ENCODE measurements at regions of chr16 and their contacts with region 1.

Region 1: DNA sequence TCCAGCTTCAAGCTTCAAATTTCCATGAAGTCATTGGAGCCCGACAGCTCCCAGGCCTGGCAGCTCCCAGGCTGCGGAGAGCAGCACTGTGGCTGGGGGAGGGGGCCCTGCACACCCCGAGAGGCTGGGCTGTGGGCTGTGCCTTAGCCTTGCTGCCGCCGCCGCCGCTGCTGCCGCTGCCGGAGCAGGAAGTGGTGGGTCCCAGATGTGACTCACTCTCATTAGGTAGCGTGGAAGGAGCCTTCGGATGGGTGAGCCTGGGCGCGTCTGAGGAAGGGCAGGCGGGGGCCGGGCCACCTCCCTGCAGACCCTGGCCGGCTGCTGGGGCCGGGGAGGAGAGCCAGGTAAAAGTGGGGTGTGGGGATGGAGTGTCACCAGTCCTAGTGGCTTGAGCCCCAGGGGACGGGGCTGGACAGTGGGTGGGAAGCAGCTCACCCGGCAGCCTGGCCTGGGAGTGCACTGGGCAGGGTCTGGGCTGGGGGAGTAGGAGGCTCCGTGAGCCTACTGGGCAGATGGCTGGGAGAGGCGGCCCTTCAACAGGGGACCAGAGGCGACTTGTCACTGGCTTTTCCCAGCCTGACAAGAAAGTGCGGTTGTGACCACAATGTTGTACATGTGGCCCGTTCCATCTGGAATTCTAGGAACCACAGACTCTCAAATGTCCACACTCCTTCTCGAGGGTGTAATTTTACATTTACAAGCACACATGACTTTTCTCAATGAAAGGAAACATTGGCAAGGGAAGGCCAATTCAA is at the start of gene ADCY7:
- DNase-seq: peak; percentile 85
- H3K4me3 ChIP-seq: peak within 1 kb of the TSS; percentile 76
- H3K27ac ChIP-seq: peak within 1 kb of the TSS; percentile 60
- H3K4me1 ChIP-seq: peaks cover 54% of the 10 kb centered on the region
- CTCF ChIP-seq: no peak
- total RNA-seq, gene ADCY7: 36.9 and 49.9 TPM in 2 replicates

Region 2: GRCh38 chr16:50281964-50282538 is 15.5 kb after region 1 on chr16:
- CTCF ChIA-PET with region 1: interaction called, 4 read pairs
- POLR2A ChIA-PET with region 1: interaction called, 15 read pairs
- intact Hi-C with region 1: loop called (anchors 1 kb)
- DNase-seq: peak; percentile 93
- H3K4me3 ChIP-seq: peak overlapping the region; percentile 55
- H3K27ac ChIP-seq: peak overlapping the region; percentile 85
- H3K4me1 ChIP-seq: peaks cover 72% of the 10 kb centered on the region
- CTCF ChIP-seq: no peak

Region 3: DNA sequence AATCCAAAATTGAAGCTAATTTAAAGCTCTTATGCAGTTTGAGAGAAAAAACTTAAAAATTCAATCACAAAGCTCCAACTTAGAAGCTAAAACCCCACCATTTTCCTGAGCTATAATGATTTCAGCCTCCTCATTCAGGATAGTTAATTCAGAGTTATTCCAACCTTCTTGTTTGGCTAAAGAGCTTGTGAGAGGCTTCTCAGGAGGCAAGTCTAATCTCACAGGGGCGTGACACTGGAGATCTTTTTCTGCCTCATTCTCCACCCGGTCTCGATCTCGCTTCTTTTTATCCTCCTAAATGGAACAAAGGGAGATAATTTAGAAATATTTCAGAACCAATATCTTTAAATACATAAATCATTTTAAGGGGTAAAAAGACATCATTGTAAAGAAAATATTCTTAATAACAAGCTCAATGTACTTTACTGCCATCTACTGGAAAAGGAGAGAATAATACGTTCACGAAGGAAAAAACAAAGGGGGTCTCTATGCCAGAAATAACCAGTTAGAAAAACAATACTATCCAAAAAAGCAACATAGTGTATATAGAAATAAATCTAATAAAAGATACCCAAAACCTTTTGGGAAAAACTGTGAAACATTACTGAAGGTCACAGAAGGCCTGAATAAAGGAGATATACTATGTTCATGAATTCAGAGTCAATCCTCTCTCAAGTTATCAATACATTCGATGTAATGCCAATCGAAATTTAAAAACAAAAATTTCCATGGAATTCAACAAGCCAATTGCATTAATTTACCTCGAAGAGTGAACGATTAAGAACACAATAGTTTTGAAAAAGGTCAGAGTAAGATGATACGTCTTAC is 88.3 kb after region 1 on chr16:
- CTCF ChIA-PET with region 1: no interaction called
- POLR2A ChIA-PET with region 1: no interaction called
- intact Hi-C with region 1: loop called (anchors 1 kb)
- DNase-seq: peak; percentile 56
- H3K4me3 ChIP-seq: no peak overlapping the region
- H3K27ac ChIP-seq: no peak overlapping the region
- H3K4me1 ChIP-seq: no peaks in the 10 kb centered on the region
- CTCF ChIP-seq: peak; percentile 94